HCT116 (cell line): ENCODE measurements at regions of chr3 and their contacts with region 1.

Region 1: GRCh38 chr3:108406661-108407206 is 103.7 kb downstream of the MYH15 start:
- DNase-seq: peak; percentile 52
- ATAC-seq: peak; percentile 99
- H3K4me3 ChIP-seq: no peak overlapping the region
- H3K27ac ChIP-seq: no peak overlapping the region
- H3K4me1 ChIP-seq: no peaks in the 10 kb centered on the region
- H3K27me3 ChIP-seq: no peaks in the 10 kb centered on the region
- CTCF ChIP-seq: peak; percentile 50 to 79 (median 74); a peak in 5 of 6 replicates
- POLR2A ChIP-seq: no peak
- RAD21 ChIP-seq: peak; percentile 78

Region 2: DNA sequence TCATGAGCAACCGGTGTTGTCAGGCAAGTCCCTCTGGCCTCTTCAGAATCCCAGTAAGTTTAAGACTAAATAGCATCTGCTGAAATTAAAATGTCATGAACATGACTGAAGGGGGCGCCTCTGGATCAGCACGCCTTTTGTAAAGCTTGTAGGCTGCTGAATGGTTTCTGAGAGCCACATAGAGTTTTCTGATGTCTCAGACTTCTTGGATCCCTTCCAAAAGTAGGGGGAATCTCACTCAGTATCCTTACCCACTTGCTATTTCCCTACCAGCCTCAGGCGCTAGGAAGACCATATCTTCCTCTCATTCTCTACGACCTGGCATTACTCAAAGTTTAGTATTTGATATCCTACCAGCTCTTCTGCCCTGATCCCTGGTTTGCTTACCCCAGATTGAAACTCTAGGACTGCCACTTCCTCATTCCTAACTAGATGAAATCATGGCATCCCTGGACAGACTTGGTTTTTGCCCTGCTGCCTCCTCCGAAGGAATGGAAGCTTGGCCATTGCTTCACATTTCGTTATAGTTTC is 253.2 kb before region 1 on chr3:
- CTCF ChIA-PET with region 1: interaction called, 6 read pairs
- POLR2A ChIA-PET with region 1: no interaction called
- RAD21 ChIA-PET with region 1: no interaction called
- intact Hi-C with region 1: loop called (anchors 1 kb)
- DNase-seq: peak; percentile 62
- ATAC-seq: peak; percentile 93
- H3K4me3 ChIP-seq: no peak overlapping the region
- H3K27ac ChIP-seq: no peak overlapping the region
- H3K4me1 ChIP-seq: peaks cover 3 to 11% of the 10 kb centered on the region in 2 experiments; a peak in 2 of 4 replicates
- H3K27me3 ChIP-seq: no peaks in the 10 kb centered on the region
- CTCF ChIP-seq: peak; percentile 59 to 68 (median 60); a peak in 5 of 6 replicates
- POLR2A ChIP-seq: no peak
- RAD21 ChIP-seq: peak; percentile 82

Region 3: GRCh38 chr3:109265295-109265694 is 858.6 kb after region 1 on chr3:
- CTCF ChIA-PET with region 1: no interaction called
- POLR2A ChIA-PET with region 1: no interaction called
- RAD21 ChIA-PET with region 1: no interaction called
- intact Hi-C with region 1: no loop called
- DNase-seq: no peak
- ATAC-seq: no peak
- H3K4me3 ChIP-seq: no peak overlapping the region
- H3K27ac ChIP-seq: no peak overlapping the region
- H3K4me1 ChIP-seq: no peaks in the 10 kb centered on the region
- H3K27me3 ChIP-seq: no peaks in the 10 kb centered on the region
- CTCF ChIP-seq: no peak
- POLR2A ChIP-seq: no peak
- RAD21 ChIP-seq: no peak